PC-9 (cell line): ENCODE measurements at regions of chr15 and their contacts with region 1.

Region 1: GRCh38 chr15:62857411-62857853 is 185.1 kb upstream of the TPM1 start:
- DNase-seq: peak; percentile 85 to 93
- H3K4me3 ChIP-seq: peak overlapping the region; percentile 38; the same call in 1 of the 2 replicates
- H3K27ac ChIP-seq: peak overlapping the region; percentile 99
- H3K4me1 ChIP-seq: peaks cover 69% of the 10 kb centered on the region
- H3K27me3 ChIP-seq: no peaks in the 10 kb centered on the region
- CTCF ChIP-seq: no peak

Region 2: GRCh38 chr15:62840518-62841268 is 16.7 kb before region 1 on chr15:
- CTCF ChIA-PET with region 1: no interaction called
- POLR2A ChIA-PET with region 1: no interaction called
- intact Hi-C with region 1: no loop called
- DNase-seq: no peak
- H3K4me3 ChIP-seq: no peak overlapping the region
- H3K27ac ChIP-seq: no peak overlapping the region
- H3K4me1 ChIP-seq: peaks cover 25% of the 10 kb centered on the region
- H3K27me3 ChIP-seq: no peaks in the 10 kb centered on the region
- CTCF ChIP-seq: no peak

Region 3: GRCh38 chr15:62935300-62936081 is 78.1 kb after region 1 on chr15:
- CTCF ChIA-PET with region 1: no interaction called
- POLR2A ChIA-PET with region 1: interaction called, 25 read pairs
- intact Hi-C with region 1: no loop called
- DNase-seq: no peak
- H3K4me3 ChIP-seq: no peak overlapping the region
- H3K27ac ChIP-seq: no peak overlapping the region
- H3K4me1 ChIP-seq: peaks cover 15% of the 10 kb centered on the region
- H3K27me3 ChIP-seq: no peaks in the 10 kb centered on the region
- CTCF ChIP-seq: no peak

Region 4: GRCh38 chr15:62995047-62995674 is 137.7 kb after region 1 on chr15:
- CTCF ChIA-PET with region 1: no interaction called
- POLR2A ChIA-PET with region 1: no interaction called
- intact Hi-C with region 1: loop called (anchors 5 kb)
- DNase-seq: peak in 1 of 2 experiments; percentile 76
- H3K4me3 ChIP-seq: no peak overlapping the region
- H3K27ac ChIP-seq: no peak overlapping the region
- H3K4me1 ChIP-seq: peaks cover 41% of the 10 kb centered on the region
- H3K27me3 ChIP-seq: no peaks in the 10 kb centered on the region
- CTCF ChIP-seq: no peak

Region 5: GRCh38 chr15:63019539-63020109 is 162.2 kb after region 1 on chr15:
- CTCF ChIA-PET with region 1: no interaction called
- POLR2A ChIA-PET with region 1: no interaction called
- intact Hi-C with region 1: loop called (anchors 2 kb)
- DNase-seq: peak; percentile 91 to 94
- H3K4me3 ChIP-seq: no peak overlapping the region; the same call in 1 of the 2 replicates
- H3K27ac ChIP-seq: peak overlapping the region; percentile 75
- H3K4me1 ChIP-seq: peaks cover 51% of the 10 kb centered on the region
- H3K27me3 ChIP-seq: no peaks in the 10 kb centered on the region
- CTCF ChIP-seq: no peak